Gastrocnemius medialis (tissue), 4 donors: ENCODE measurements at regions of chr13 and their contacts with region 1.

Region 1: DNA sequence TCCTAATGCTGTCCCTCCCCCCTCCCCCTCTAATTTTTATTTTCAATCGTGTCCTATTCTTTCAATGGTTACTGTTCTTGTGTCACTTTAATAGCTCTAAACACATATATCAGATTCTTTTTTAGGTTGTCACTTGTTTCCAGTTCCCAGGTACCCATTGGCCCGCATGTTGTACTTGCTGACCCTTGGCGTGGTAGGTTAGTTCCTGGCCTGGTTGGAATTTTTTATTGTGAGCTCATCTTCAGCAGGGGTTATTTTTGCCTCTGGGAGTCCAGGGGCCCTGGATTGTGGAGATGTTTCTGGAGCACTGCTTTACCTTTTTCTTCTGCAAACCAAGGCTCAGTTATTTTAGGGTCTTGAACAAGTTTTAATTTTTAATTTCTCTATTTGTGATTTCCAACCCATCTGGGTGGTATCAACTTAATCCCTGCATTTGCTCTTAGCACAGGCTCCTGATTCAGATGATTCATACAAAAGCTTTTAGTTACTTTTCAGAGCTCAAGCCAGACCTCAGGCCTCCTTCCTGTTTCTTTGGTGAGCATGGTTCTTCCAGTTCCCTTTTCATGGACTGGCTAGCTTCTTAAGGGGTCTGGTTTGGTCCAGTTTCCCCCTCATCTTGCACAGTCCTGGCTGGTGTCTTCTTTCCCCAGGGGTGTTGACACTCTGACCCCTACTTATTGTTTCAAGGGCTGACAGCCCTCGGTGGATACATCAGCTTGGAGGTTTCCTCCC is 220.5 kb downstream of the TM9SF2 start:
- DNase-seq: no peak
- ATAC-seq: no peak
- H3K4me3 ChIP-seq: no peak overlapping the region
- H3K27ac ChIP-seq: no peak overlapping the region
- H3K4me1 ChIP-seq: peaks cover 7% of the 10 kb centered on the region in 2 donors
- H3K27me3 ChIP-seq: no peaks in the 10 kb centered on the region
- CTCF ChIP-seq: no peak
- POLR2A ChIP-seq: no peak

Region 2: GRCh38 chr13:99464441-99464949 is 257.3 kb before region 1 on chr13:
- in situ Hi-C with region 1: no loop called
- intact Hi-C with region 1: loop called (anchors 10 kb)
- DNase-seq: no peak
- ATAC-seq: no peak
- H3K4me3 ChIP-seq: no peak overlapping the region
- H3K27ac ChIP-seq: no peak overlapping the region
- H3K4me1 ChIP-seq: no peaks in the 10 kb centered on the region
- H3K27me3 ChIP-seq: peaks cover 0 to 5% (median 2%) of the 10 kb centered on the region in 3 donors
- CTCF ChIP-seq: no peak
- POLR2A ChIP-seq: no peak

Region 3: GRCh38 chr13:99805361-99805760 is 83.6 kb after region 1 on chr13:
- in situ Hi-C with region 1: no loop called
- intact Hi-C with region 1: no loop called
- DNase-seq: no peak
- ATAC-seq: no peak
- H3K4me3 ChIP-seq: no peak overlapping the region
- H3K27ac ChIP-seq: no peak overlapping the region
- H3K4me1 ChIP-seq: no peaks in the 10 kb centered on the region
- H3K27me3 ChIP-seq: no peaks in the 10 kb centered on the region
- CTCF ChIP-seq: no peak
- POLR2A ChIP-seq: no peak